ENCODE measurements at regions of chr13 and their contacts with region 1.

Region 1: DNA sequence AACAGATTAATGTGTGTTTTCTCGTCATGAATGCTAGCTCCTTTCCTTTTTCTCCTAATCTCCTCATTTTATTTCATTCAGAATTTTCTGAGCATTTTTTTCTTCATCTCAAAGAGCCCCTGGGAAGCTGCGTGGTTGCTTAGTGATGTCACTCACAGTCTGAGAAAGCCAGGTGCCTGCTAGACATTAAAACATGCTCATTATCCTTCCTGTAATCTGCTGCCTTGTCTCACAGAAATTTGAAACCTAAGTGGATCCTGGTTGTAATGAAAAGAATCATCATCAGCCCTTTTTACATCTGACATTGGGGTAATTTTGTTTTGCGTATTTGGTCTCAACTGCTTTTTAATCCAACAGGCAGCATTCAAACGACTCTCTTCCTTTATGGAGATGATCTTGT is 108.2 kb upstream of the RNF113B start:
- DNase-seq: no peak
- H3K4me3 ChIP-seq: no peak overlapping the region
- H3K27ac ChIP-seq: no peak overlapping the region
- H3K27me3 ChIP-seq: no peaks in the 10 kb centered on the region
- CTCF ChIP-seq: no peak

Region 2: DNA sequence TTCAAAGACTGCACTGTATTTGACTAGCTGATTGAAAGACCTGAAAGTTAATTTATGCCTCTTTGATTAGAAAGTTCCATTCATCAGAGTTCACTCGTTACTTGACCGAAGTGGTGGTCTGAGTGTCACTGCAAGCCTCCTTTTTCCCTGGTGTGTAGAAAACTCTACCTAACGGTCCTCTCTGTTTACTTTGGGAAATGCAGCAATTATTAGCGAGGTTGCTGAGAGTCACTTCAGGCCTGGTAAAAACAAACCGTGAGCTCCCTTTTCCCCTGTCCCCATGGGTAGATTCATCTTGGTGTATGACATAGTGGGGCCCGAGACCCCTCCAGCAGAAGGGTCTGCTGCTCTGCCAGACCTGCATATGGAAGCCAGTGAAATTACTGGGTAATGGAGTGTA is 18.5 kb after region 1 on chr13:
- CTCF ChIA-PET with region 1: interaction called, 12 read pairs
- POLR2A ChIA-PET with region 1: no interaction called
- DNase-seq: no peak
- H3K4me3 ChIP-seq: no peak overlapping the region
- H3K27ac ChIP-seq: no peak overlapping the region
- H3K27me3 ChIP-seq: no peaks in the 10 kb centered on the region
- CTCF ChIP-seq: no peak

Region 3: DNA sequence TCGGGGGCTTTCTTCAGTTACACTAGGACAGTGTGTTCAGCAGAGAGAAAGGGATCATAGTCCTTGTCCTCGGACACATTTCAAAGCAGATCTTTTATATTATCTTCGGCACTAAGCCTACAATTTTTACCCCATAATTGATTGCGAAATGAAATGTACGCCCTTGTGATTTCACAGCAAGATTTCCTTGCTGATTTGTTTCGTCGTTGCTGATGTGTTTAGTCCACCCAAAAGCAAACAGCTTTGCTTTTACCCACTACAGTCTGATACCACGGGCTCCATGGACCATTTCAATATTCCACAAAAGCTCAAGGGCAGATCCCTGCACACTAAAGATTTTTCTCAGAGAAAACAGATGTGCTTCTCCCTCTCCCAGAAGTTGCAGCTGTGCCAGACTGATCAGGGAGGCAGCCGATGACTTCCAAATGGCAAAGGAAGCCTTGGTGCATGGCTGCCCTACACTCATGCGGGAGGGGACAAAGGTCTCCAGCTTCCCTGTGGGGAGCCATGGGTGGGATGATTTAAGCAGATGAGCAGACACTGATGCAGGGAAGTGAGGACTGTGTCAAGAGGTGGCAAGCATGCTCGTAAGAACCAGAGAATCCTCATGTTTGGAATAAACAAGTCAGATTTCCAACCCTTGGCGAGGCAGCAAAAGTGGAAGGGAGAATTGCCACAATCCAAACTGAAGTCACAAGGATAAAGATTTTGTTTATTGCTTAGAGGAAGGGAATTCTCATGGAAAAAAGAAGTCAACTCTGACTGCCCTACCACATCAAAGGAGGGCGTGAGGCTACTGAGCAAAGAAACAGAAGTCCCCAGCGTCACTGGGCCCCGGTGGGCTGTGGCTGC is 210.5 kb after region 1 on chr13:
- CTCF ChIA-PET with region 1: no interaction called
- POLR2A ChIA-PET with region 1: no interaction called
- DNase-seq: no peak
- H3K4me3 ChIP-seq: no peak overlapping the region; the same call in 1 of the 2 replicates
- H3K27ac ChIP-seq: peak overlapping the region; percentile 54
- H3K27me3 ChIP-seq: no peaks in the 10 kb centered on the region
- CTCF ChIP-seq: no peak

Region 4: GRCh38 chr13:98972627-98973026 is 687.3 kb after region 1 on chr13:
- CTCF ChIA-PET with region 1: no interaction called
- POLR2A ChIA-PET with region 1: no interaction called
- DNase-seq: no peak
- H3K4me3 ChIP-seq: no peak overlapping the region
- H3K27ac ChIP-seq: no peak overlapping the region
- H3K27me3 ChIP-seq: no peaks in the 10 kb centered on the region
- CTCF ChIP-seq: no peak